Naive thymus-derived CD4-positive, alpha-beta T cell (primary cell): ENCODE measurements at regions of chr2 and their contacts with region 1.

Region 1: DNA sequence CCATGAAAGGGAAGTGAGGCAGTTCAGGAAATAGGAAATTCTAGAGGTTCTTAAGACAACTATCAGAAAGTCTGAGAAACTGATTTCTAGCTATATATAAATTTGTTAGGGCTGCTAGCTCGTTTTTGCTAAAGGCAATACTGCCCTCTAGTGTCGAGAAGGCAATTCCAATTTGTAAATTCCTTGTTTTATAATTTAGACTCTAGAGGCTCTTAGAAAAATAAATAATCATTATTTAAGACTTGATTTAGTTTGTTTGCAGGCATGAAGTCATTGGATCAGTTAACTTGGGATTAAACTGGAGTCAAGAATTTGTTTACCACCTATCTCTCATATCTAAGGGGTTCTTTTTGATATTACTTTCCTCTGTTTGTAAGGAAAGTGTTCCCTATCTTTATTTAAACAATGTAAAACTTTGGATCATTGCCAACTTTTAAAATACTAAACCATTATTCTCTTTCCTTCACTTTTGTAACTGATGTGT is 66.2 kb downstream of the ACVR2A start:
- DNase-seq: peak in 7 of 9 donors; percentile 28 to 69 (median 57)
- ATAC-seq: peak; percentile 55
- H3K4me3 ChIP-seq: no peak overlapping the region
- H3K4me3 Mint-ChIP-seq: no peak overlapping the region
- H3K27ac ChIP-seq: no peak overlapping the region
- H3K27ac Mint-ChIP-seq: peak overlapping the region in 2 of 9 donors; percentile 18 to 71
- H3K4me1 ChIP-seq: no peaks in the 10 kb centered on the region
- H3K4me1 Mint-ChIP-seq: peaks cover 0 to 9% (median 4%) of the 10 kb centered on the region in 7 donors
- H3K27me3 ChIP-seq: no peaks in the 10 kb centered on the region
- H3K27me3 Mint-ChIP-seq: no peaks in the 10 kb centered on the region

Region 2: DNA sequence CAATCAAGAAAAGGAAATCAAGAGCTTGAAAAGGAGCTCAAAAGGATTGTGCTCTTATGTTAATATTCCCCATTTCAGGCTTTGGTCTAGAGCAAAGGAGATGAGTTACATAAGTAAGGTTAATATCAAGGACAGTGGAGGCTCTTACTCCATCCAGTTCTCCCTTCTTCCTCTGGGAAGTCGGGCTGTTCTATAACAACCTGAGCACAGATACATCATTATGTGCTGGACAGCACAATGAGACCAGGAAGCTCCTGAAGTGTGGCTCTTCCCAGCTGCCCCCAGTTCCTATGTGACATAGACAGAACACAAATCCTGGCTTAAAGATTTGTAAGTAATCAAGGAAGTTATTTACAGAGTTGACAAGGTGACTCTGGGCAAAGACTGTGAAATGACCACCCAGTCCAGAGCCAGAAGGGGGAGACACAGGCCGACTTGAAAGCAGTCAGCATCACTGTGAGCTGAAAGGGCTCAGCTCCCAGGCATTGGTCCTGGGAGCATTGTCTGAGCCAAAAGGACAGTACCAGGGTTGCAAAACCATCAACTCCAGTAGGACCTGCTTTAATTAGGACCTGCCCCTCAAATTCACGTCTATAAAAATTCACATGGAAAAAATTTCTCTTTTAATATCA is 983.8 kb before region 1 on chr2:
- CTCF ChIA-PET with region 1: no interaction called
- POLR2A ChIA-PET with region 1: no interaction called
- intact Hi-C with region 1: loop called (anchors 5 kb)
- DNase-seq: no peak
- ATAC-seq: no peak
- H3K4me3 ChIP-seq: no peak overlapping the region
- H3K4me3 Mint-ChIP-seq: no peak overlapping the region
- H3K27ac ChIP-seq: no peak overlapping the region
- H3K27ac Mint-ChIP-seq: no peak overlapping the region
- H3K4me1 ChIP-seq: no peaks in the 10 kb centered on the region
- H3K4me1 Mint-ChIP-seq: no peaks in the 10 kb centered on the region
- H3K27me3 ChIP-seq: no peaks in the 10 kb centered on the region
- H3K27me3 Mint-ChIP-seq: peaks cover 0 to 5% (median 0%) of the 10 kb centered on the region in 5 donors

Region 3: DNA sequence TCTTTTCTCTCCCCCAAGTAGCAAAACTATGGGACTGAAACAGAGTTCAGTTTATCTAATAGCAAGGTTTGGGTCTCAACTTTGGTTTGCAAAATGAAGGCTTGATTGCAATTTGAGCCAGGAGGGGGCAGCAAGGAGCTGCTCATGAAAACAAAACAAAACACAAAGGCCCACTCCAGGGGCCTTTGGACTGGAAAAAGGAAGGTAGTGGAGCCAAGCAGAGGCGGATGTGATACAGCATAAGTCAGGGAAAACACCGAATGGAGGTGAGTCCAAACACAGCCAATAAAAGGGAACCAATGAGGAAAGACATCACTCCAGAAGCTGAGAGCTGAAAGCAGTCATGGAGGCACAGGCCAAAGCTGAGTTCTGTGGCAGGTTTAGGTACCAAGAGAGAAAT is 865.9 kb before region 1 on chr2:
- CTCF ChIA-PET with region 1: interaction called, 13 read pairs
- POLR2A ChIA-PET with region 1: no interaction called
- intact Hi-C with region 1: loop called (anchors 1 kb)
- DNase-seq: peak in 7 of 9 donors; percentile 5 to 26 (median 12)
- ATAC-seq: peak; percentile 38
- H3K4me3 ChIP-seq: no peak overlapping the region
- H3K4me3 Mint-ChIP-seq: no peak overlapping the region
- H3K27ac ChIP-seq: no peak overlapping the region
- H3K27ac Mint-ChIP-seq: peak overlapping the region in 1 of 9 donors; percentile 56
- H3K4me1 ChIP-seq: no peaks in the 10 kb centered on the region
- H3K4me1 Mint-ChIP-seq: peaks cover 0 to 6% (median 0%) of the 10 kb centered on the region in 7 donors
- H3K27me3 ChIP-seq: no peaks in the 10 kb centered on the region
- H3K27me3 Mint-ChIP-seq: peaks cover 0 to 17% (median 4%) of the 10 kb centered on the region in 5 donors

Region 4: DNA sequence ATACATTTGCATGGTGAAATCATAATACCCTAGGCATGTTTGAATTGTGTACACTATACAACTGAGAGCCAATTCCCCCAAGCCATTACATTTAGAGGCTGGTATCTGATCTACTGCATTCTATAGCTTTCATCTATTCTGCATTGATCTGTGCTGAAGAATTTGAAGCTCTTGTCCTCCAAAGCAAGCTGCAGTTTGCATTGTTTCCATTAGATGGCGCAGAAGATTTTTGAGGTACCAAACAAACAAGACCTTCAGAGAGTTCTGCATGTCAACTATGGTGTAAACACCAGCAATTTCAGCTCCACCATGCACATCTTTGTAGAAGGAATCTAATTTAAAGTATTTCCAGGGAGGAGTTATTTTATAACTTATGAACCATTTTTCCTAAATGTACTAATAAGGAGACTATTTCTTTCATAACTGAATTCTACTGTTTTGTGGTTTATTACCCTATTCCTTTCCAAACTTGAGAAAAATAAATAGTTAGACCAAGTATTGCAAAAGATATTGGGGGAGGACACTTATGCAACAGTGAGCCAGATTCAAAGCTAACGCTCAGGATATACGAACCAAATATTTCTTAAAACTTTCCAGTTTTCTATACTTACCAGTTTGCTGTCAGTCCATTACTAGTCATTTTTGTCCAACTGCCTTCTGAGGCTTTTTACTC is 828.0 kb before region 1 on chr2:
- CTCF ChIA-PET with region 1: interaction called, 32 read pairs
- POLR2A ChIA-PET with region 1: no interaction called
- intact Hi-C with region 1: loop called (anchors 1 kb)
- DNase-seq: peak in 8 of 9 donors; percentile 11 to 57 (median 44)
- ATAC-seq: peak; percentile 68
- H3K4me3 ChIP-seq: no peak overlapping the region
- H3K4me3 Mint-ChIP-seq: no peak overlapping the region
- H3K27ac ChIP-seq: no peak overlapping the region
- H3K27ac Mint-ChIP-seq: no peak overlapping the region
- H3K4me1 ChIP-seq: no peaks in the 10 kb centered on the region
- H3K4me1 Mint-ChIP-seq: peaks cover 0 to 12% (median 0%) of the 10 kb centered on the region in 7 donors
- H3K27me3 ChIP-seq: no peaks in the 10 kb centered on the region
- H3K27me3 Mint-ChIP-seq: peaks cover 7 to 15% (median 9%) of the 10 kb centered on the region in 5 donors

Region 5: DNA sequence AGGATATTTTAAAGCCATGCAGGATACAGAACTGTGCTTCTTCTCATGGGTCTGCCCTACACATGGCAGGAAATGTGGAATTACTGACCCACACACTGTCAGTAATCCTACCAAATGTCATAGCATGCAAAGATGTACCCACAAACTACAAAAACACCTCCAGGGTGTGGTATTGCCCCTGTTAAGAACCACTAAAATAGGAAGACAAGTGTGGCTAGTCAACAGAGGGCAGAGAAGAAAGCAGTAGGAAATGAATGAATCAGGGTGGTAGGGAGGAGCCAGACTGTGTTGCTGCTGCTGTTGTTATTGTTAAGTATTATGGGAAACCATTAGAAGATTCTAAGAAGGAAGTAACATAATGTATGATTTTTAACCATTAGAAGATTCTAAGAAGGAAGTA is 622.9 kb before region 1 on chr2:
- CTCF ChIA-PET with region 1: interaction called, 6 read pairs
- POLR2A ChIA-PET with region 1: no interaction called
- intact Hi-C with region 1: loop called (anchors 1 kb)
- DNase-seq: peak in 5 of 9 donors; percentile 2 to 48 (median 19)
- ATAC-seq: peak; percentile 87
- H3K4me3 ChIP-seq: no peak overlapping the region
- H3K4me3 Mint-ChIP-seq: peak overlapping the region in 1 of 10 donors; percentile 45
- H3K27ac ChIP-seq: no peak overlapping the region
- H3K27ac Mint-ChIP-seq: peak overlapping the region in 4 of 9 donors; percentile 25 to 84 (median 63)
- H3K4me1 ChIP-seq: peaks cover 0 to 10% of the 10 kb centered on the region in 2 donors
- H3K4me1 Mint-ChIP-seq: peaks cover 8 to 43% (median 9%) of the 10 kb centered on the region in 7 donors
- H3K27me3 ChIP-seq: no peaks in the 10 kb centered on the region
- H3K27me3 Mint-ChIP-seq: peaks cover 0 to 5% (median 0%) of the 10 kb centered on the region in 5 donors

Region 6: GRCh38 chr2:147331790-147332419 is 579.1 kb before region 1 on chr2:
- CTCF ChIA-PET with region 1: no interaction called
- POLR2A ChIA-PET with region 1: no interaction called
- intact Hi-C with region 1: loop called (anchors 1 to 10 kb)
- DNase-seq: peak in 4 of 9 donors; percentile 22 to 29 (median 25)
- ATAC-seq: peak; percentile 52
- H3K4me3 ChIP-seq: no peak overlapping the region
- H3K4me3 Mint-ChIP-seq: peak overlapping the region in 1 of 10 donors; percentile 28
- H3K27ac ChIP-seq: no peak overlapping the region
- H3K27ac Mint-ChIP-seq: no peak overlapping the region
- H3K4me1 ChIP-seq: no peaks in the 10 kb centered on the region
- H3K4me1 Mint-ChIP-seq: peaks cover 2 to 25% (median 10%) of the 10 kb centered on the region in 7 donors
- H3K27me3 ChIP-seq: no peaks in the 10 kb centered on the region
- H3K27me3 Mint-ChIP-seq: peaks cover 0 to 2% (median 0%) of the 10 kb centered on the region in 5 donors

Region 7: GRCh38 chr2:147382322-147382948 is 528.6 kb before region 1 on chr2:
- CTCF ChIA-PET with region 1: no interaction called
- POLR2A ChIA-PET with region 1: no interaction called
- intact Hi-C with region 1: loop called in 1 of 2 experiments (anchors 1 kb)
- DNase-seq: no peak
- ATAC-seq: no peak
- H3K4me3 ChIP-seq: no peak overlapping the region
- H3K4me3 Mint-ChIP-seq: no peak overlapping the region
- H3K27ac ChIP-seq: no peak overlapping the region
- H3K27ac Mint-ChIP-seq: no peak overlapping the region
- H3K4me1 ChIP-seq: no peaks in the 10 kb centered on the region
- H3K4me1 Mint-ChIP-seq: peaks cover 0 to 3% (median 0%) of the 10 kb centered on the region in 7 donors
- H3K27me3 ChIP-seq: no peaks in the 10 kb centered on the region
- H3K27me3 Mint-ChIP-seq: peaks cover 0 to 3% (median 0%) of the 10 kb centered on the region in 5 donors